PC-3 (cell line): ENCODE measurements at regions of chr13 and their contacts with region 1.

Region 1: GRCh38 chr13:24995226-24995804 is 100.6 kb upstream of the PABPC3 start:
- DNase-seq: peak; percentile 86
- ATAC-seq: peak; percentile 88
- H3K4me3 ChIP-seq: no peak overlapping the region
- H3K27ac ChIP-seq: no peak overlapping the region
- H3K4me1 ChIP-seq: no peaks in the 10 kb centered on the region
- H3K27me3 ChIP-seq: peaks cover 26% of the 10 kb centered on the region
- CTCF ChIP-seq: peak; percentile 80

Region 2: DNA sequence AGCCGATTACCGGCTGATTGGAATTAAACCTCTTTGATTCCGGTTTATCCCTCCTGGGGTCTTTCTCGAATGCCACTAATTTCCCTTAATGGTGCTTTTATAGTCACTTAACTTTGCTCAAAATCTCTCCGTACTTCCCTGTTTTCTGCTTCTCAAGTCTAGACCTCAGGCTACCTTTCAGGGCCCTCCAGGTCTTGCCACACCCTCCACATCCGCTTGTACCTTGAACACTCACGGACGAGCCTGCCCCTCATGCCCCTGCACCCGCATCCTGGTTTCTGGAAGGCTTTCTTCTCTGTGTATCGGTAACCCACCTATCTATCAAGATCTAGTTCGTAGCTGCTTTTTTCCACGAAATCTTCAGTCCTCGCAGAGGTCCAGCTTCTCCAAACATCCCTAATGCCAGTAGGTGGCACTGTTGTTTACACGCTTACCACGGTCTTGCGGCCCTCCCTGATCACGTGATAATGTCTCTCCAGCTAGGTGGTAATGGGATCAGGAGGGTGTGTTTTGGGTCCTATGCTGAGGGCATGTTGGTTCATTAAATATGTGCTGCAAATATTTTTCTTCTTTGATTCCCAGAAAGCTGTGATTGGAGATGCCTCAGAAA is 301.3 kb before region 1 on chr13:
- CTCF ChIA-PET with region 1: no interaction called
- POLR2A ChIA-PET with region 1: no interaction called
- intact Hi-C with region 1: loop called (anchors 10 kb)
- DNase-seq: peak; percentile 78
- ATAC-seq: peak; percentile 86
- H3K4me3 ChIP-seq: no peak overlapping the region
- H3K27ac ChIP-seq: no peak overlapping the region
- H3K4me1 ChIP-seq: no peaks in the 10 kb centered on the region; the same call in 1 of the 2 replicates
- H3K27me3 ChIP-seq: peaks cover 32% of the 10 kb centered on the region
- CTCF ChIP-seq: peak; percentile 84

Region 3: DNA sequence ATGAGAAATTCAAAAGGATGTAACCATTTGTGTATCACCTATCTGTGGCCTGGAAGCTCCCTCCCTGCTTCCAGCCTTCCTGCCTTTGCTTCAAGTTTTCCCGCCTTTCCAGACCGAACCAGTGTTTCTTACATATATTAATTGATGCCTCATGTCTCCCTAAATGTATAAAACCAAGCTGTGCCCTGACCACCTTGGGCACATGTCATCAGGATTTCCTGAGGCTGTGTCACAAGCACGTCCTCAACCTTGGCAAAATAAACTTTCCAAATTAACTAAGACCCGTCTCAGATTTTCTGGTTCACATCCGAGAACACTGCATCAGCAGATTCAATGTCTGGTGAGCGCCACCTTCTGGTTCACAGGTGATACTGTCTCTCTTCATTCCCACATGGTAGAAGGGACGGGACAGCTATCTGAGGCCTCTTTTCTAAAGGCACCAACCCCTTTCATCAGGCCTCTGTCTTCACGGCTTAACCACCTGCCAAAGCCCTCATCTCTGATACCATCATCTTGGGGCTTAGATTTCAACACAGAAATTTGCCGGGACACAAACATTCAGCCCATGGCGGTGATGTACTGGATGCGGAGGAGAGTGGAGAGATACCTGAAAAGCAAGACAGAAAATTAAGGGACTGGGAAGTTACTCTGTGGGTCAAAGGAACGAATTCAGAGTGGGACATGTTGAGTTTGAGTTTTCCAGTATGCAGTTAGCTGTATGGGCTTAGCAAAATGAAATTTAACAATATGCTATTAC is 41.9 kb after region 1 on chr13:
- CTCF ChIA-PET with region 1: interaction called, 5 read pairs
- POLR2A ChIA-PET with region 1: no interaction called
- intact Hi-C with region 1: loop called (anchors 2 kb)
- DNase-seq: peak; percentile 68
- ATAC-seq: peak; percentile 87
- H3K4me3 ChIP-seq: no peak overlapping the region
- H3K27ac ChIP-seq: no peak overlapping the region
- H3K4me1 ChIP-seq: no peaks in the 10 kb centered on the region
- H3K27me3 ChIP-seq: peaks cover 56% of the 10 kb centered on the region
- CTCF ChIP-seq: peak; percentile 77